Activated T-helper 2 cell treated with anti-CD3 and anti-CD28 coated beads, Interferon-gamma antibody, Interleukin-2, Interleukin-4, amounts not matched to agents 10 μg/mL and 5 μg/mL and 100 μg/mL, durations not matched to agents 14 hours and 24 hours and 36 hours (primary cell): ENCODE measurements at regions of chr1 and their contacts with region 1.

Region 1: GRCh38 chr1:179025125-179025974 is at the start of gene FAM20B:
- DNase-seq: peak; percentile 84
- H3K4me3 Mint-ChIP-seq: peak within 1 kb of the TSS; percentile 93
- H3K27ac Mint-ChIP-seq: peak within 1 kb of the TSS; percentile 84
- H3K4me1 Mint-ChIP-seq: peaks cover 32% of the 10 kb centered on the region
- H3K27me3 Mint-ChIP-seq: peaks cover 15% of the 10 kb centered on the region
- total RNA-seq, gene FAM20B: 38.1 and 39.7 TPM in 2 replicates

Region 2: GRCh38 chr1:178552856-178553255 is 472.5 kb before region 1 on chr1:
- intact Hi-C with region 1: no loop called
- DNase-seq: no peak
- H3K4me3 Mint-ChIP-seq: no peak overlapping the region
- H3K27ac Mint-ChIP-seq: no peak overlapping the region
- H3K4me1 Mint-ChIP-seq: no peaks in the 10 kb centered on the region
- H3K27me3 Mint-ChIP-seq: no peaks in the 10 kb centered on the region

Region 3: GRCh38 chr1:179229214-179230140 is 204.1 kb after region 1 on chr1 and contains the start of gene ABL2:
- intact Hi-C with region 1: loop called (anchors 5 kb)
- DNase-seq: peak; percentile 34
- H3K4me3 Mint-ChIP-seq: peak within 1 kb of the TSS; percentile 91
- H3K27ac Mint-ChIP-seq: peak within 1 kb of the TSS; percentile 79
- H3K4me1 Mint-ChIP-seq: peaks cover 24% of the 10 kb centered on the region
- H3K27me3 Mint-ChIP-seq: peaks cover 8% of the 10 kb centered on the region
- total RNA-seq, gene ABL2: 7.7 and 8.5 TPM in 2 replicates